Transverse colon (tissue), 4 donors: ENCODE measurements at regions of chr7 and their contacts with region 1.

Region 1: GRCh38 chr7:18345641-18346234 is 149.8 kb upstream of the HDAC9 start:
- DNase-seq: peak; percentile 33
- H3K4me3 ChIP-seq: no peak overlapping the region
- H3K27ac ChIP-seq: no peak overlapping the region
- H3K4me1 ChIP-seq: no peaks in the 10 kb centered on the region
- H3K27me3 ChIP-seq: no peaks in the 10 kb centered on the region
- CTCF ChIP-seq: peak; percentile 74 to 84 (median 79)
- EP300 ChIP-seq: no peak
- POLR2A ChIP-seq: no peak

Region 2: GRCh38 chr7:17680943-17681351 is 664.8 kb before region 1 on chr7:
- in situ Hi-C with region 1: loop called in 2 of 4 experiments (anchors 25 kb)
- intact Hi-C with region 1: no loop called
- DNase-seq: no peak
- H3K4me3 ChIP-seq: no peak overlapping the region
- H3K27ac ChIP-seq: peak overlapping the region in 1 of 4 donors; percentile 61
- H3K4me1 ChIP-seq: no peaks in the 10 kb centered on the region
- H3K27me3 ChIP-seq: no peaks in the 10 kb centered on the region
- CTCF ChIP-seq: peak; percentile 37 to 65 (median 53)
- EP300 ChIP-seq: no peak
- POLR2A ChIP-seq: no peak

Region 3: GRCh38 chr7:17769918-17770317 is 575.8 kb before region 1 on chr7:
- in situ Hi-C with region 1: loop called in 1 of 4 experiments (anchors 10 kb)
- intact Hi-C with region 1: no loop called
- DNase-seq: peak; percentile 61
- H3K4me3 ChIP-seq: no peak overlapping the region
- H3K27ac ChIP-seq: no peak overlapping the region
- H3K4me1 ChIP-seq: peaks cover 0 to 10% (median 0%) of the 10 kb centered on the region in 4 donors
- H3K27me3 ChIP-seq: no peaks in the 10 kb centered on the region
- CTCF ChIP-seq: peak; percentile 51 to 62 (median 56)
- EP300 ChIP-seq: no peak
- POLR2A ChIP-seq: no peak

Region 4: GRCh38 chr7:18212758-18213157 is 133.0 kb before region 1 on chr7:
- in situ Hi-C with region 1: loop called in 1 of 4 experiments (anchors 25 kb)
- intact Hi-C with region 1: no loop called
- DNase-seq: no peak
- H3K4me3 ChIP-seq: no peak overlapping the region
- H3K27ac ChIP-seq: no peak overlapping the region
- H3K4me1 ChIP-seq: no peaks in the 10 kb centered on the region
- H3K27me3 ChIP-seq: no peaks in the 10 kb centered on the region
- CTCF ChIP-seq: no peak
- EP300 ChIP-seq: no peak
- POLR2A ChIP-seq: no peak

Region 5: GRCh38 chr7:19051767-19052375 is 706.1 kb after region 1 on chr7:
- in situ Hi-C with region 1: loop called in 1 of 4 experiments (anchors 25 kb)
- intact Hi-C with region 1: no loop called
- DNase-seq: peak; percentile 18
- H3K4me3 ChIP-seq: no peak overlapping the region
- H3K27ac ChIP-seq: no peak overlapping the region
- H3K4me1 ChIP-seq: no peaks in the 10 kb centered on the region
- H3K27me3 ChIP-seq: no peaks in the 10 kb centered on the region
- CTCF ChIP-seq: peak; percentile 55 to 77 (median 58)
- EP300 ChIP-seq: no peak
- POLR2A ChIP-seq: no peak